Prostate gland (tissue), 2 donors: ENCODE measurements at regions of chr6 and their contacts with region 1.

Region 1: DNA sequence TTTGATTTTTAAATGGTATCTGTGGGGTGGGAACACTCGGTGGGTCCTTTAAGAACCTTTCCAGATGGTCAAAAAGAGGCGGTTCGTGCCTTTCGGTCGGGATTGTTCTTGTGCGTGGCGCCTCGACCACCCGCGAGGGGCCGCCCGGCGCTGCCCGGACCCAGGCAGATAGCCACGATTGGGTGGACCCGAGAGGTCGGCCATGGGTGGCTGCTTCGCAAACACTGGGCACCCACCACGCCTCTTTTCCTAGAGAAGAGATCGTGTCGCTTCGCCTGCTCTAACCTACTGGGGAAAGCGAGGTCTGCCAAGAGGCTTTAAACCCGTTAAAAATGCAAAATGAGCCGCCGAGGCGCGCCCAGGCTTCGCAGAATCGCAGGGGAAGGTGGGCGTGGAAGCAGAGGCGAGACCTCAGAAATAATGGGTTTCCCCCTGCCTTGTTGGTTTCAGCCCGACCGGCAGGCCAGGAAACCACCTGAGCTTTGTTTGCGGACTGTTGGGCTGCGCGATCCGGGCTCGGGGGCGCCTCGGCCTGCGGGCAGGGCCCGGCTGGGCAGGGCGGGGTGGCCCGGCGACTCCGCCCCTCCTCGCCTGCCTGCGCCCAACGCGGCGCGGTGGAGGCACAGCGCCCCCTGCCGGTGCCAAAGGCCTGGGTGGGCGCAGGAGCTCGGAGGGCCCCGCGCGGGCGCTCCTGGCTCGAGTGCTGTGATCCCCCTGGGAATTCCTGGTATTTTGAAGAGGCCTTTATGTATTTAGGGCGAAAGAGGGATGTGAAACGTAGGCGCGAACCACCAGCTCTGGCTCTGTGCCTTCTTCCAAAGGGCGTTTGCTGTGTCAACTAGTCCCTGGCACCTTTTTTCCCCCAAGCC is 1.6 kb downstream of the MARCKS start:
- DNase-seq: peak; percentile 92
- H3K4me3 ChIP-seq: peak overlapping the region; percentile 68 to 72
- H3K27ac ChIP-seq: peak overlapping the region; percentile 90 to 94
- H3K4me1 ChIP-seq: no peaks in the 10 kb centered on the region
- H3K27me3 ChIP-seq: no peaks in the 10 kb centered on the region
- CTCF ChIP-seq: peak; percentile 97 to 99 (median 98)
- POLR2A ChIP-seq: no peak

Region 2: DNA sequence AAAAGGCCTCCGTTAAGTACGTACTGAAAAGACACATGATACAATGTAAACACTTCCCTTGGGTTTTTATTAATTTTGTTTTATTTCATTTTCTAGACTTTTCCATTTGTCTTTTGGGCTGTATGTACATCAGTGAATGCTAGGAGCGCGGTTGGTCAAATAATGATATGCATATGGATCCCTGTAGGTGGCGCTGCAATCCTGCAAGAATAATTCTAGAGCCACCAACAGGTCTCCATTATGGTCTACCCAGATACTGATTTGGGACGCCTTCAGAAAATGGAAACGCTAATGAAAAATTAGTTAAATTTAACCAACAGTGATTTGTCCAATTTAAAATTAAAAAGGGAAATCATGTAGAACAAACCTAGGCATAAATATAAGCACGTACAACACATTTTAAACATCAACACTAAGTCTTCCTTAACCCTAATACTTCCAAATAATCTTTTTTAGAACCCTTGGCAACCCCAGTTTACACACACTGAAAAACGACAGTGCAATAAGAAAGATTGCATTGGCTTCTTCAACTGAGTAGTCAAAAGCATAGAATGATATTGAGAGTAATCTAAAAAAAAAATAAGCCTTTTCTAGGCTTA is 1078.1 kb before region 1 on chr6:
- intact Hi-C with region 1: loop called (anchors 5 kb)
- DNase-seq: peak; percentile 68
- H3K4me3 ChIP-seq: no peak overlapping the region
- H3K27ac ChIP-seq: no peak overlapping the region
- H3K4me1 ChIP-seq: no peaks in the 10 kb centered on the region
- H3K27me3 ChIP-seq: no peaks in the 10 kb centered on the region
- CTCF ChIP-seq: peak; percentile 63 to 88 (median 84)
- POLR2A ChIP-seq: no peak

Region 3: GRCh38 chr6:113414511-113414910 is 444.2 kb before region 1 on chr6:
- intact Hi-C with region 1: loop called (anchors 10 kb)
- DNase-seq: peak; percentile 28
- H3K4me3 ChIP-seq: no peak overlapping the region
- H3K27ac ChIP-seq: no peak overlapping the region
- H3K4me1 ChIP-seq: no peaks in the 10 kb centered on the region
- H3K27me3 ChIP-seq: no peaks in the 10 kb centered on the region
- CTCF ChIP-seq: peak in 2 of 4 experiments; percentile 33 to 49
- POLR2A ChIP-seq: no peak